ENCODE measurements at regions of chr1 and their contacts with region 1.

Region 1: GRCh38 chr1:207619871-207620542 is 24.9 kb upstream of the CR1L start:
- DNase-seq: peak; percentile 28 to 55
- ATAC-seq: peak; percentile 97 to 99
- H3K4me3 ChIP-seq: no peak overlapping the region
- H3K27ac ChIP-seq: no peak overlapping the region
- H3K4me1 ChIP-seq: no peaks in the 10 kb centered on the region
- CTCF ChIP-seq: peak; percentile 61
- EP300 ChIP-seq: no peak
- POLR2A ChIP-seq: no peak
- RAD21 ChIP-seq: peak; percentile 25 to 27; a peak in 1 of 5 replicates

Region 2: DNA sequence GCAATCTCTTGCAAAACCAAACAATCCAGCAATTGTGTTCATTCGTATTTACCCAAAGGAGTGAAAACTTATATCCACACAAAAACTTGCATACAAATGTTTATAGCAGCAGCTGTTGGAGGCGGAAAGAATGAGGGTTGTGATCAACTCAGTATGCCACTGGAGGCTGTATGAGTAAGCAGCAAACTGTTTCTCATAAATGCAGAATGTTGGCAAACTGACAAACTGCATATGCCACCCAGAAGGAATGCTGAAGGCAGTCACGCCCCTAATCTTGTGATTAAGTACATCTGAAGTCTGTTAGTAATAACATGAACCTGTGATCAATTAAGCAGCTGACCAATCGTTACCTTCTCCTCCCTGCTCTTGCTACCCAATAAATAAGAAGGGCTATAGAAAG is 226.4 kb before region 1 on chr1:
- CTCF ChIA-PET with region 1: no interaction called
- POLR2A ChIA-PET with region 1: no interaction called
- DNase-seq: peak in 1 of 2 experiments; percentile 71
- ATAC-seq: peak; percentile 45 to 67; a peak in 4 of 6 replicates
- H3K4me3 ChIP-seq: no peak overlapping the region
- H3K27ac ChIP-seq: peak overlapping the region in 1 of 2 experiments; percentile 34; a peak in 2 of 6 replicates
- H3K4me1 ChIP-seq: peaks cover 13% of the 10 kb centered on the region; the same call in 2 of the 3 replicates
- CTCF ChIP-seq: no peak
- EP300 ChIP-seq: no peak
- POLR2A ChIP-seq: no peak
- RAD21 ChIP-seq: no peak

Region 3: GRCh38 chr1:207579436-207579799 is 40.6 kb before region 1 on chr1:
- CTCF ChIA-PET with region 1: interaction called, 17 read pairs
- POLR2A ChIA-PET with region 1: no interaction called
- DNase-seq: peak; percentile 15 to 64
- ATAC-seq: peak; percentile 98 to 99
- H3K4me3 ChIP-seq: no peak overlapping the region
- H3K27ac ChIP-seq: no peak overlapping the region
- H3K4me1 ChIP-seq: no peaks in the 10 kb centered on the region
- CTCF ChIP-seq: peak; percentile 65
- EP300 ChIP-seq: no peak
- POLR2A ChIP-seq: no peak
- RAD21 ChIP-seq: peak; percentile 58

Region 4: GRCh38 chr1:207603777-207604176 is 16.2 kb before region 1 on chr1:
- CTCF ChIA-PET with region 1: interaction called, 24 read pairs
- POLR2A ChIA-PET with region 1: no interaction called
- DNase-seq: peak in 1 of 2 experiments; percentile 17
- ATAC-seq: no peak
- H3K4me3 ChIP-seq: no peak overlapping the region
- H3K27ac ChIP-seq: no peak overlapping the region
- H3K4me1 ChIP-seq: no peaks in the 10 kb centered on the region
- CTCF ChIP-seq: no peak
- EP300 ChIP-seq: no peak
- POLR2A ChIP-seq: no peak
- RAD21 ChIP-seq: no peak

Region 5: DNA sequence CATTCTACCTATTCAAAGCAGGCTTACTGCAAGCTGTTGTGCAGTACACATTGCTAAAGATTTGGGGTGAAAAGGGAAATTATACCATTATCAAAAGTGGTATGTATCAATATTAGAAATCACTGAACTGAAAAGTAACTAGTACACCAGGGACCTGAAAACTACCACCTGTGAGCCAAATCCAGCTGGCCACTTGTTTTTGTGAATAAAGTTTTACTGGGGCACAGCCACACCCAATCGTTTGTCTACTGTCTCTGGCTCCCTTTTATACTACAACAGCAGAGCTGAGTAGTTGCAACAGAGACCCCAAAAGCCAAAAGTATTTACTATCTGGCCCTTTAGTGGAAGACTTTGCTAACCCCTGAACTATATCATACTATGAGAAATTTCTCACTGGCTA is 11.1 kb after region 1 on chr1:
- CTCF ChIA-PET with region 1: interaction called, 10 read pairs
- POLR2A ChIA-PET with region 1: no interaction called
- DNase-seq: no peak
- ATAC-seq: no peak
- H3K4me3 ChIP-seq: no peak overlapping the region
- H3K27ac ChIP-seq: no peak overlapping the region
- H3K4me1 ChIP-seq: peaks cover 4% of the 10 kb centered on the region; the same call in 1 of the 3 replicates
- CTCF ChIP-seq: no peak
- EP300 ChIP-seq: no peak
- POLR2A ChIP-seq: no peak
- RAD21 ChIP-seq: no peak

Measured in A549 (cell line).